Posterior vena cava (tissue), 2 donors: ENCODE measurements at regions of chr5 and their contacts with region 1.

Region 1: GRCh38 chr5:98905857-98906690 is 22.7 kb downstream of the CHD1 start:
- DNase-seq: no peak

Region 2: DNA sequence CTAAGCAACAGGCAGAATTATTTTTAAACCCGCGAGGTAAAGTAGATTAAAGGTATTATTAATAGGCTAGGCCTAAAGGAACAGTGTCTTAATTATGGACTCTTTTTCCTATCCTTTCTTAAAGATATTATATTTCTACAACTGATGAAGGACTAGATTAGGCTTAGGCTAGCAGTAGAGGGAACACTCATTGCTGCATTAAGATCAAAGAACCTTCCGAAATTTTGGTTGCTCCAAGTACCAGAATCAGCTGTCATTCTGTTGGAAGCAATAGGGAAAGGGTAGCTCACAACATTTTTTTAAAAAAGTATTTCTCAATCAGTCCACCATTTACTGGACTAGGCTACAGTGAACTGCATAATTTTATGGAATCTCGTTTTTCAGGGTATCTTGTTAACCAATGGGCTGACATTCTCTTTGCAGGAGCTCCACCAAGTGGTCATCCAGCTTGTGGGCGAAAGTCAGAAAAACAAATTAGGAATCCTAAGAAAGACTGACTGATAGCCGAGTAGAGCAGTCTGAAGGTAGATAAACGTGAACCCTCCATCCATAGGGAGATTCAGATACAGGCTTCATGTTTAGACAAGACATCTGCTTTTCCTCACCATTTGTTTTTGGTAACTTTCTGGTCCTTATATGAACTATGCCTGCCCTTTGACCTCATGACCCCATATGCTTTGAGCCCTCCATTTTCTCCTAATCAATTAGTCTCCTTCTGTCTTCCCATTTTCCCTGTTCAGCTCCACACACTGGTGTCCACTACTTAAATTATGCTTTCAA is 126.3 kb after region 1 on chr5:
- intact Hi-C with region 1: loop called (anchors 5 kb)
- DNase-seq: no peak